RWPE1 (cell line): ENCODE measurements at regions of chr20 and their contacts with region 1.

Region 1: DNA sequence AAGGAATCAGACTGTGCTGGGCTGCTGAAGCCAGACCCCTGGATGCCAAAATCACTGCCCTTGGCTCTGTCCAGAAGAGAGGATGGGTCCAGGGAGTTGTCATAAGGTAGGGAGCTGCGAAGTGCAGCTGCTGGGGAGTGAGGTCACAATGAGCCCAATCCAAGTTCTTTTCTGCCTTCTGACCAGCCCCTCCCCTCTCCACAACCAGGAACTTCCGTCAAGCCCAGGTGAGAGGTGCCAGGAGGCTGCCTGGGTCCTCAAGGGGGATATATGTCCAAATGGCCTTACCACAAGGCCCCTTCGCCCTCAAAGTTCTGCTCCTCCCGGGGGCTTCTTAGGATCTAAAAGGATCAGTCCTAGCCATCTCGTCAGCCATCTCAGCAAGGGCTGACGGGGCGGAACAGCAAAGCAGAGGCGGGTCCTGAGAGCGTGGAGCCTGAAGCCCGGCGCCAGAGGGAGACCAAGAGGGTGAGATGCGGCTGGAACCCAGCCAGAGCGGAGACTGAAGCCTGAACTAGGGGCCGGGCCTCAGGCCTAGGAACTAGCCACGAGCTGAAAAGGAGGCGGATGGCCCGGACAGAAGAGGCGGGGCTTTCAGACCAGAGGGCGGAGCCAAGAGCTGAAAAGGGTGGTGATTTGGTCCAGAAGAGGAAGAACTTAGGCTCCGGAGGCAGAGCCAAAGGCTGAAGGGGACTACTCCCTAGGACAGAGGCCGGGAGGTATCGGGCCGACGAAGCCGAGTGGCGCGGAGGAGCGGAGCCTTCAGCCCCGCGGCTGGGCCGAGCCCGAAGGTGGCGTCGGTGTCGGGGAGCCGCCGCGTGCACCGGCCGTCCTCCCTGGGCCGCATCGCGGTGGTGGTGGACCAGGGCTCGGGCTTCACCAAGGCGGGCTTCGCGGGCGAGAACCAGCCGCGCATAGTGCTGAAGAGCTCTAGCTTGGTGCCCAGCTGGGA is at the start of gene ACTL10:
- DNase-seq: peak; percentile 99
- H3K27ac ChIP-seq: peak within 1 kb of the TSS; percentile 88
- CTCF ChIP-seq: peak; percentile 45; the same call in 1 of the 2 replicates

Region 2: DNA sequence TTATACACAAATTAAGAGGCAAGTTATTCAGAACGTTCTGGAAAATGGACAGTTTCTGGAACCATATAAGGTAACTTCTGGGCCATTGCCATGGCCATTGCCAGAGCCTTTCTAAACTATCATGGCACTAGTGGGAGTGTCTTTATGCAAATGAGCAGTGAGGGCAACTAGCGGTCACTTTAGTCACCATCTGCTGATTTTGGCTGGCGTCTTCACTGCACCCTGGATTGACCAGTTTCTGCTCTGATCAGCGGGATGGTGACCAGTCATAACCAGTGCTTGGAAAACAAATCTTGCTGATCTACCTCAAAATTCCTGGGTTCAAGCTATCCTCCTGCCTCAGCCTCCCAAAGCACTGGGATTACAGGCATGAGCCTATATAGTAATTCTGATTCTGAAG is 215.7 kb before region 1 on chr20:
- CTCF ChIA-PET with region 1: interaction called, 16 read pairs
- POLR2A ChIA-PET with region 1: interaction called, 3 read pairs
- DNase-seq: peak; percentile 48
- H3K27ac ChIP-seq: no peak overlapping the region
- CTCF ChIP-seq: no peak

Region 3: DNA sequence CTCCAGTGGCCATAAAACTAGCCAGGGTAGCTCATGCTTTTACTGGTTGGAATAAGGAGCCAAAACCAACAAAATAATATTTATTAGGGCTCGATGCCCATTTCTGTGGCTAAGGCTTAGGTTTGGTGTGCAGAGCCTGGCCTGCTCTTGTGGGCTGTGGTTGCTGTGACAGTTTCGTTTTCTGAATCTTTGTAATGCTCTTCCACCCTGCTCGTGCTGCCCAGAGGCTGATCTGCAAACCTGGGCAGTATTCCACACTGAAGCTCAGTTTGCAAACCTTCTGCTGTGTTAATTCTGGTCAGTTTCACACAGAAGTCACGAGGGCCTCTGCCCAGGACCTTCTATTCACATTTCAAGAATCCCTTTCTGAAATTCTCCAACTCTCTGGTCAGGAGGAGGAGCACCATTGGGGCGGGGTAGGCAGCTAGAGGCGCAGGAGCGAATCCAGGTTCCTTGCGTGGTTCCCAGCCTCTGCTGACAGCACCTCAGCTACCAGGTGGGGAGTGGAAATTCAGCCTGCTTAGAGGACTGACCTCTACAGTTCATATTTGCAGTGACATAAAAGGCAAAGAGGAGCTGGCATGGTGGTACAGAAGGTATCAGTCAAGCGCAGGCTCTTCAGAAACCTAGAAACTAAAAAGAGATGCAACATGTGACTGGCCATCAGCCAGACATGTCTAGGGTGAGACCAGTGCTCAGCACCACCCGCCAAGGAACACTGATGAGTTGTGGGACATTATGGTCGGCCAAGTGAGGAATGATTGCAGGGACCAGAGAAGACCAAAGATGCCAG is 18.8 kb before region 1 on chr20:
- CTCF ChIA-PET with region 1: interaction called, 25 read pairs
- POLR2A ChIA-PET with region 1: no interaction called
- DNase-seq: no peak
- H3K27ac ChIP-seq: peak overlapping the region; percentile 82
- CTCF ChIP-seq: no peak

Region 4: DNA sequence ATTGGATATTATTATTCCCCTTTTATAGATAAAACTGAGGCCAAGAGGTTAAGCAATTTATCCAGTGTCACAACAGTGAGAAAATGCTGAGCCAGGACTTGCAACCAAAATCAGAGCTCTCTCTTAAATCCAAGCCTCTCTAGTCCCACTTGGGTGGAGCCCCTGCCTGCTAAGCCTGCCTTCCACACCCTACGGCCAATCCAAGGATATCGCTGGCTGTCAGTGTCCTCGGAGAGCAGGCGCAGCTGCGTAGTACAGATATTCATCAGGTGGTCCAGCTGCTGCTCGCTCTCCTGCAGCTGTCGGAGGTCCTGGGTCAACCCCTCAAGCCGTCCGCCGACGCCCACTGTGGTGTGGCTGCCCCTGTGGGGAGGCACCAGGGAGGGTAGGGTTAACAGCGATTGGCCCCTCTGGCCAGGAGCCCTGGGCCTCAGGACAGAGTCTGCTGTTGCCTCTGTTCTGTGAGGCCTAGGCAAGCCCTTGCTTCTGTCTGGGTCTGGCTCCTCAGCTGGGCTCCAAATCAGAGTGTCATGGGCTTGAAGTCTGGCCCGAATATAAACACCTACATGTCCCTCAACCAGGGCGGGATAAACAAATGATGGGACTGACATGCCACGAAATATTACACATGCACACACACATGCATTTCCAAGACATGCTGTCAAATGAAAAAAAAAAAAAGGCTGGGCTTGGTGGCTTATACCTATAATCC is 11.6 kb after region 1 on chr20:
- CTCF ChIA-PET with region 1: interaction called, 10 read pairs
- POLR2A ChIA-PET with region 1: interaction called, 3 read pairs
- DNase-seq: no peak
- H3K27ac ChIP-seq: peak overlapping the region; percentile 42
- CTCF ChIP-seq: no peak